Caco-2 (cell line): ENCODE measurements at regions of chr1 and their contacts with region 1.

Region 1: DNA sequence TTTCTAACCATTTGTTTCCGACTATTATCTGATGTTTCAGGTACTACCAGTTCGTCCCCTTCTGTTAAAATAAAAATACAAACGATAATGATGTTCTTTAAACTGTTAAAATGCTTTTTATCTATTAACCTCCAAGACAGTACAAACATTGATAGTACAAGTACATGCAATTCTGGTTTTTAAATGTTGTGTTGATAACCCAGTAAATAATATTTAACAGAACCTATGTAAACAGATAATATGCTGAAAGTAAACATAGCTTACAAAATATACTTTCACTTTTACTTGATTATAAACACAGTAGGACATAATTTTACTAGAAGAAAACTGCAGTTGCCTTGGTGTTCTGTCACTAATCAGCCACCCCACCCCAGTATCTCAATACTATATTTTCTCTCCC is 76.9 kb downstream of the COQ8A start:
- DNase-seq: no peak
- H3K4me3 ChIP-seq: no peak overlapping the region
- H3K4me3 Mint-ChIP-seq: no peak overlapping the region
- H3K27ac Mint-ChIP-seq: no peak overlapping the region
- H3K4me1 ChIP-seq: peaks cover 7% of the 10 kb centered on the region; the same call in 1 of the 2 replicates
- H3K4me1 Mint-ChIP-seq: no peaks in the 10 kb centered on the region
- H3K27me3 ChIP-seq: no peaks in the 10 kb centered on the region
- H3K27me3 Mint-ChIP-seq: no peaks in the 10 kb centered on the region
- CTCF ChIP-seq: no peak

Region 2: DNA sequence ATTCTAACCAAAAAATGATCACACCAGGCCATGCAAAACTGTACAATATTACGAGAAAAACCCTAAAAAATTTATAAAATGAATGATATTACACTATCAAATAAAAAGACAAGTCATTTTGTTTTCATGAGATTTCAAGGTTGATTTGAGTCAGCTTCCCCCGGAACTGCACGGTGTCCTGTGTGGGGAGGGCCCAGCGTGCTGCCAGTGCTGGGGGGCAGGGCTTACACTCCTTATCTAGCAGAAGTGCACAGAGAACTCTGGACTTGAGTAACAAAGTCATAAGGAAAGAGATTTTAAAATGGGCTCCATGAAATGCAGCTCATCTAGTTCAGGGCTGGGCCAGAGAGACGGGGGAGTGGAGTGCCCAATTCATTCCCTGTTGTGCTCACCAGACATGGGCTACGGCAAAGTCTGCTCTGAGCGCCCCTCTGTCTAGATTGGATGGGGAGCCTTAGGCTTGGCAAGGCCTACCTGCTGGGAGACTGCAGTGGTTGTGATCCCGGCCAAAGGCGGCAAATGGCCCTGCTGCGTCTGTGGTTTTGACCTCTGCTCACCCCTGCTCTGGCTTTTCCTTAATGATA is 26.8 kb before region 1 on chr1:
- CTCF ChIA-PET with region 1: no interaction called
- POLR2A ChIA-PET with region 1: no interaction called
- intact Hi-C with region 1: loop called (anchors 1 kb)
- DNase-seq: no peak
- H3K4me3 ChIP-seq: no peak overlapping the region
- H3K4me3 Mint-ChIP-seq: no peak overlapping the region
- H3K27ac Mint-ChIP-seq: peak overlapping the region; percentile 18
- H3K4me1 ChIP-seq: peaks cover 8% of the 10 kb centered on the region
- H3K4me1 Mint-ChIP-seq: peaks cover 13% of the 10 kb centered on the region
- H3K27me3 ChIP-seq: no peaks in the 10 kb centered on the region
- H3K27me3 Mint-ChIP-seq: no peaks in the 10 kb centered on the region
- CTCF ChIP-seq: no peak